A673 (cell line): ENCODE measurements at regions of chr5 and their contacts with region 1.

Region 1: DNA sequence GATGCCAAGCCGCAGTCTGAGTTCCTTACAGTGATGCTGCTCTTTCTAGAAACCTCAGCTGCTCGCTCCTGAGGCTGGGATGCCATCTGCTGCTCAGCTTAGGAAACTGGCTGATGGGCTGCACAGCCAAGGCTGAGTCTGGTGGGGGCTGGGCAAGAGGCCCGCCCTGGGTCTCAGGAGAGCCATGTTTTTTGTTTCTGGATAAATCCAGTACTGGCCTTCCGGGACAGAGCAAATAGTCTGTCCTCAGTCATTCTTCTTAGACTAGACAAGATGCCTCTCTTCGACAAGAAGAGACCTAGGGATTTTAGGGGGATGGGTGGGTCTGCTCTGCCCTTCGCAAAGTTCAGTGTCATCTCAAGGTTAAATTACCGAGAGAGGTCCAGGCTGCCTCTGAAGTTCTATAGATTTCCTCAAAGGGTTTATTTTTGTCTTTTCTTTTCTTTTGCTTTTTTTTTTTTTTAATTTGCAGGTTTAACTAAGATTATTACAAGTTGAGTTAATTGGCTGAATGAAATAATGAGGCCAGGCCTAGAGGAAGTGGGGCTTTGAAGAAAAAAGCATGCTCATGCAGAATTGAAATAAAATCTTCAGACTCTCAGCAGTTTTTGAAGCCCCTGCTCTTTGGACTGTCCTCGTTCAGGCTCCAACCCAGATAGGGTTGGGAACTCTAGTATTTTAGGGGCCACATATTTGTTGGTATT is 30.6 kb upstream of the MATR3 start:
- DNase-seq: peak; percentile 94
- H3K4me3 ChIP-seq: no peak overlapping the region
- H3K27ac ChIP-seq: no peak overlapping the region
- H3K4me1 ChIP-seq: no peaks in the 10 kb centered on the region
- H3K27me3 ChIP-seq: no peaks in the 10 kb centered on the region
- CTCF ChIP-seq: peak; percentile 92

Region 2: GRCh38 chr5:138542956-138543729 is 719.8 kb before region 1 on chr5 and contains the start of gene ETF1:
- CTCF ChIA-PET with region 1: no interaction called
- POLR2A ChIA-PET with region 1: interaction called, 12 read pairs
- intact Hi-C with region 1: no loop called
- DNase-seq: peak; percentile 100
- H3K4me3 ChIP-seq: peak within 1 kb of the TSS; percentile 87
- H3K27ac ChIP-seq: peak within 1 kb of the TSS; percentile 99
- H3K4me1 ChIP-seq: peaks cover 28% of the 10 kb centered on the region
- H3K27me3 ChIP-seq: no peaks in the 10 kb centered on the region
- CTCF ChIP-seq: no peak
- total RNA-seq, gene ETF1: 172 and 191 TPM in 2 replicates

Region 3: GRCh38 chr5:138641547-138642298 is 621.2 kb before region 1 on chr5:
- CTCF ChIA-PET with region 1: interaction called, 3 read pairs
- POLR2A ChIA-PET with region 1: no interaction called
- intact Hi-C with region 1: loop called (anchors 2 kb)
- DNase-seq: peak; percentile 89
- H3K4me3 ChIP-seq: no peak overlapping the region
- H3K27ac ChIP-seq: no peak overlapping the region
- H3K4me1 ChIP-seq: no peaks in the 10 kb centered on the region
- H3K27me3 ChIP-seq: no peaks in the 10 kb centered on the region
- CTCF ChIP-seq: peak; percentile 94

Region 4: DNA sequence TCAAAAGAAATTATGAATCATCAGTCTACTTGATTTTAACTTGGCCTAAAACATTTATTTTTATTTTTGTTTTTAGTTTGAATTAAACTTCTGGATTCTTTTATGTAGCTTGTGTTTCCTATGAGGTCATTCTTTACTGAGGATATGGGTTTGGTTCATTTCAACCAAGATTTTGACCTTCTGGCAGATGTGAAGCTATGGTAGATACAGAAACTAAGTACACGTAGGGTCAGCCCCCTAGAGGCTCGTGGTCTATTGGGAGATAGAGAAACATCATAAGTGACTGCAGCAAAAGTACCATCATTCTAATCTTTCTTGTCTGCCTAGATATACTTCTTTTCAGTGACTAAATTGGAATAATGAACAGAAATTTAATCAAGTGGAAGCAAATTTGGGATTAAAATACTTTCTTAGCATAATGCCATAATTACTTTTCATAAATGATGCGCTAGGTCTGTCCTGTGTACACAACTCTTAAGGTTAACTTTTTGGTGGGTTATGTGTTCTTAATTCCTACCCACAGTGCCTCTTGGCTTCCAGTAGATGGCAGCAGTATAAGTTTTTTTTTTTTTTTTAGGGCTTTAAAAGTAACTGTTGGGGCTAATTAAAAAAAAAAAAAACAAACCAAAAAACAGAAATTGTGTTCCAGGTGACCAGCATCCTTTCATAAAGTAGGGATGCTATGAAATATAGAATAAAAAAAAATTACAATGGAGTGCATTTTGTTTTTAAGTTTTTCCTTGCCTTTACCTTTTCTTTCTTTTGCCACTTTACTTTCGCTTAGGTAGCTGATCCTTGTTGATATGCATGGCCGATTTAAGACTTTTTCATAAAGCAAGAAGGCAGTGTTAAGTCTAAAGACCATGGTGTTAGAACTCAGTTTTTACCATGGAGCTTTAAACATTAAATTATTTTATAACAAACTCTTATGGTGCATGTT is 437.7 kb before region 1 on chr5:
- CTCF ChIA-PET with region 1: no interaction called
- POLR2A ChIA-PET with region 1: no interaction called
- intact Hi-C with region 1: loop called (anchors 10 kb)
- DNase-seq: peak; percentile 31
- H3K4me3 ChIP-seq: no peak overlapping the region
- H3K27ac ChIP-seq: peak overlapping the region; percentile 11
- H3K4me1 ChIP-seq: peaks cover 4% of the 10 kb centered on the region
- H3K27me3 ChIP-seq: no peaks in the 10 kb centered on the region
- CTCF ChIP-seq: peak; percentile 78

Region 5: DNA sequence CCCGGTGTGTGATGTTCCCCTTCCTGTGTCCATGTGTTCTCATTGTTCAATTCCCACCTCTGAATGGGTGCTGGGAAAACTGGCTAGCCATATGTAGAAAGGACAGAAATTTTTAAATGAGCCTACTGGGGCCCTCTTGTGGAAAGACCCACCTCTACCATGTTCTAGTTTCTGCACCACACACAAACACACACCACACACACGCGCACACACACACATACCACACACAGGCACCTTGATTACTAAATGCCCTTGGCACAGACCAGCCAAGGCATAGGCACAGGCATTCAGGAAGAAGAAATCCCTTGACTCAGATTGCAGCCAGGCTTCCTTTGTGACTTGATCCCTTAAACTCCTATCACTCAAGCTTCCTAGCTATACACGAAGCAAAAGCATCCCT is 125.2 kb before region 1 on chr5:
- CTCF ChIA-PET with region 1: interaction called, 3 read pairs
- POLR2A ChIA-PET with region 1: no interaction called
- intact Hi-C with region 1: loop called (anchors 5 kb)
- DNase-seq: peak; percentile 54
- H3K4me3 ChIP-seq: no peak overlapping the region
- H3K27ac ChIP-seq: no peak overlapping the region
- H3K4me1 ChIP-seq: no peaks in the 10 kb centered on the region
- H3K27me3 ChIP-seq: no peaks in the 10 kb centered on the region
- CTCF ChIP-seq: peak; percentile 55